A549 (cell line): ENCODE measurements at regions of chr15 and their contacts with region 1.

Region 1: GRCh38 chr15:101320501-101321052 is 25.5 kb upstream of the SNRPA1 start:
- DNase-seq: no peak
- ATAC-seq: no peak
- H3K4me3 ChIP-seq: no peak overlapping the region
- H3K27ac ChIP-seq: no peak overlapping the region
- H3K4me1 ChIP-seq: no peaks in the 10 kb centered on the region
- CTCF ChIP-seq: no peak
- EP300 ChIP-seq: no peak
- POLR2A ChIP-seq: no peak
- RAD21 ChIP-seq: no peak

Region 2: GRCh38 chr15:101288908-101289513 is 31.6 kb before region 1 on chr15:
- CTCF ChIA-PET with region 1: no interaction called
- POLR2A ChIA-PET with region 1: no interaction called
- DNase-seq: peak; percentile 73 to 85
- ATAC-seq: peak; percentile 73 to 78; a peak in 4 of 6 replicates
- H3K4me3 ChIP-seq: no peak overlapping the region
- H3K27ac ChIP-seq: no peak overlapping the region
- H3K4me1 ChIP-seq: peaks cover 19% of the 10 kb centered on the region
- CTCF ChIP-seq: peak; percentile 89
- EP300 ChIP-seq: no peak
- POLR2A ChIP-seq: no peak
- RAD21 ChIP-seq: peak; percentile 47 to 54

Region 3: GRCh38 chr15:101307048-101307896 is 13.3 kb before region 1 on chr15:
- CTCF ChIA-PET with region 1: interaction called, 10 read pairs
- POLR2A ChIA-PET with region 1: no interaction called
- DNase-seq: no peak
- ATAC-seq: peak in 1 of 2 experiments; percentile 11; a peak in 3 of 6 replicates
- H3K4me3 ChIP-seq: no peak overlapping the region
- H3K27ac ChIP-seq: no peak overlapping the region
- H3K4me1 ChIP-seq: no peaks in the 10 kb centered on the region
- CTCF ChIP-seq: no peak
- EP300 ChIP-seq: no peak
- POLR2A ChIP-seq: no peak
- RAD21 ChIP-seq: no peak

Region 4: DNA sequence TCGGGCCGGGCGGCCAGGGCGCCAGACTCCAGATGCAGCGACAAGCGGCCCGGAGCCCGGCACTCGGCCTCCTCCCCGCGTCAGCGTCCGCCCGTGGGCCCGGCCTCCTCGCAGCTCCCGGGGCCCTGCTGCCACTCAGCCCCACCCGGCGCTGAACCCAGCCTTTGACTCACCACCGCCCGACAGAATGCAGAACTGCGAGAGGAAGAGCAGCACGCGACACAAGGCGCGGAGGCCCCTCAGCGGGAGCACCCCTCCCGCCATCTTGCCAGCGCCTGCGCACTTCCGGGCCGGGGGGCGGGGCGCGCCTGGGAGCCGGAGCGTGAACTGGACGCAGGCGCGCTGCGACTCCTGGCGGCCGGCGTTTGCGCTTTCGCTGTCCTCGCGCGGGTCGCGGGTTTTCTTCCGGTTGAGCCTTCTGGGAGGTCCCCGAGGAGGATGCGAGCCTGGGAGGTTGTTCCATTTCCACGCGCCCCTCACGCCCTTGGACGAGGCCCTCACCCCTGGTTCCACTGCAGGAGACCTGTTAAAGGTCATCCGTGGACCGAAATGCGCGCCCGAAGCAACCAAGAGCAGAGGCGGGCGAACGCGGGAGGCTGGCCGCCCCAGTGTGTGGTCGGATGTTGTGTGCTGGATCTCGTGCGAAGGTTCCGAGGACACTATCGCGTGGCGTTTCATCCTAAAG is 331.7 kb after region 1 on chr15 and contains the start of gene TM2D3:
- CTCF ChIA-PET with region 1: no interaction called
- POLR2A ChIA-PET with region 1: no interaction called
- DNase-seq: peak; percentile 94 to 96
- ATAC-seq: peak; percentile 94 to 97
- H3K4me3 ChIP-seq: peak within 1 kb of the TSS; percentile 71
- H3K27ac ChIP-seq: peak within 1 kb of the TSS; percentile 89 to 98
- H3K4me1 ChIP-seq: peaks cover 19% of the 10 kb centered on the region
- CTCF ChIP-seq: peak; percentile 50
- EP300 ChIP-seq: no peak
- POLR2A ChIP-seq: peak; percentile 93
- RAD21 ChIP-seq: peak; percentile 48 to 64; a peak in 4 of 5 replicates
- polyA plus RNA-seq, gene TM2D3: 76.6 TPM in 2 replicates